ENCODE measurements at regions of chr3 and their contacts with region 1.

Region 1: DNA sequence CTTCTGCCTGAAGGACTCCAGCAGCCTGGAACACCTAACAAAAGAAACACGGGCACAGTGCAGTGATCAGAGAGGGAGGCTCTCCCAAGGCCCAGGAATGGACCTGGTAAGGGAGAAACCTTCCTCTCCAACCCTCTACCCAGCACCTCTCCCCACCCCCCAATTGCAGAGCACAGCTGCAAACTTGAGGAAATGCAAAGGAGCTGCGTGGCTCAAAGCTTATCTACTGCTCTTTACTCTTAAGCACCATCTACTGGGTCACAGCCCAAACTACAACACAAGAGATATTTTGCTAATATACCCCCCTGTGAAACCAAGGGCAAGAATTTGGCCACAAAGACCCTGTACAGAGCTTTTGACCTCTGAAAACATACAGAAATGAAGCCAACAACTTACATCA is 328.3 kb downstream of the OXSM start:
- DNase-seq: no peak
- ATAC-seq: peak; percentile 28 to 88 (median 66)
- H3K4me3 ChIP-seq: no peak overlapping the region
- H3K27ac ChIP-seq: no peak overlapping the region
- H3K4me1 ChIP-seq: no peaks in the 10 kb centered on the region
- H3K27me3 ChIP-seq: no peaks in the 10 kb centered on the region
- CTCF ChIP-seq: peak; percentile 52

Region 2: DNA sequence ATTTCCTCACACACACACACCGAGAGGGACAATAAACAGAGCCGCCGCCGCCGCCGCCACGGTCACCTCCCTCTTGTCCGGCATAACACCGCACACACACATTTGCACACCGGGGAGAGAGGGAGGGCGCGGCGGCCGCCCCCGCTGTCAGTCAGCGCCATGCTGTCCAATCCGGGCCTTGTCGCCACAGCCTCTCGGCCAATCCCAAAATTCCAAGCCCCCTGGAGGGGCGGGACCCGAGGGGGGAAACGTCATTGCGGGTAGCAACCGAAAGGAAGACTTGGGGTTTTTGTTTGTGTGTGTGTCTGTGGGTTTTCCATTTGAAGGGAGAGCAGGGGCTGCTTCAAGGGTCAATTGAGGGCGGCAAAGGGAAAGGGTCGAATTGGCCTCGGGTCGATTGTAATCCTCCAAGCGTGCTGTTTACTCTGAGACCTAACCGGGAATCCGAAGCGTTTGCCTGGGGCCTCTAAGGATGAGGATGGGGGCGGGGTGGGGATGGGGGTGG is 453.3 kb before region 1 on chr3 and contains the start of gene TOP2B:
- intact Hi-C with region 1: loop called in 1 of 2 experiments (anchors 10 kb)
- DNase-seq: peak; percentile 96 to 98
- ATAC-seq: peak; percentile 98 to 100 (median 99)
- H3K4me3 ChIP-seq: peak within 1 kb of the TSS; percentile 83
- H3K27ac ChIP-seq: peak within 1 kb of the TSS; percentile 96
- H3K4me1 ChIP-seq: peaks cover 35% of the 10 kb centered on the region
- H3K27me3 ChIP-seq: no peaks in the 10 kb centered on the region
- CTCF ChIP-seq: no peak
- total RNA-seq, gene TOP2B: 50.6 to 84.8 (median 70.1) TPM

Region 3: GRCh38 chr3:25843332-25843731 is 274.8 kb before region 1 on chr3:
- intact Hi-C with region 1: loop called in 1 of 2 experiments (anchors 10 kb)
- DNase-seq: no peak
- ATAC-seq: no peak
- H3K4me3 ChIP-seq: no peak overlapping the region
- H3K27ac ChIP-seq: no peak overlapping the region
- H3K4me1 ChIP-seq: no peaks in the 10 kb centered on the region
- H3K27me3 ChIP-seq: no peaks in the 10 kb centered on the region
- CTCF ChIP-seq: peak; percentile 21

Region 4: DNA sequence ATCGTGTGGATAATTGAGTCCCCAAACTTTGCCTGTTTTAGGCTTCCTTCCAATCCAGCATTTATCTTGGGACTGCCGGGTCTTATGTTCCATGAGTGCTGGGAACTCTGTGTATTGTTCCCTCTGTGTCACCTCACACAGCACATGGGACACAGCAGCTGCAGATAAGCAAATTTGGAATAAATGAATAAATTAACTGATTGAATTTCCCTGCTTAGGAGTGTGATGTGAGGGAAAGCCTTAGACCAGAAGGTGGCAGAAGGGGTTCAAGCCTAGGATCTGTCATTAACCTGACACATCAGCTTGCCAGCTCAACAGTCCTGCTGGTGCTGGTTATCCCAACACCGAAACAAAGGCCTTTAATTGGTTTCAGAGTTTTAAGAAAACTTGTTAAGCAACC is 214.0 kb before region 1 on chr3:
- intact Hi-C with region 1: loop called (anchors 5 to 10 kb)
- DNase-seq: no peak
- ATAC-seq: peak in 2 of 4 donors; percentile 59 to 73
- H3K4me3 ChIP-seq: no peak overlapping the region
- H3K27ac ChIP-seq: no peak overlapping the region
- H3K4me1 ChIP-seq: no peaks in the 10 kb centered on the region
- H3K27me3 ChIP-seq: no peaks in the 10 kb centered on the region
- CTCF ChIP-seq: peak; percentile 40

Region 5: DNA sequence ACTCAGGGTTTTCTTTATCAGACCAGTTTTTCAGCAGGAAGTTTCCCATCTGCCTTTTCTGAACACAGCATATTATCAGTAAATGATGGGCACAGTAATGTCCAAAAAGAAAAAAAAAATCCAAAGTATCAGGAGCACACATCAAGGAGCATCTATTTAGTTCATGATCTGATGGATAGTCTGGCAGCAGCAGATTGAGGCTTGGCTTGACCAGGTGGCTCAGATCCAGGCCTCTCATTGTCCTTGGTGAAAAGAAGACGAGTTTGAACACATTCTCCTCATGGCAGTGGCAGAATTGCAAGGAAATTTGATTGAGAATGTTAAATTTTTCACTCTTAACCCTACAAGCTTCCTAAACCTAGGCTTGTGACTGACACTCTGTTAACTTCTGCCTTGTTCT is 135.4 kb before region 1 on chr3:
- intact Hi-C with region 1: loop called in 1 of 2 experiments (anchors 10 kb)
- DNase-seq: no peak
- ATAC-seq: no peak
- H3K4me3 ChIP-seq: no peak overlapping the region
- H3K27ac ChIP-seq: no peak overlapping the region
- H3K4me1 ChIP-seq: no peaks in the 10 kb centered on the region
- H3K27me3 ChIP-seq: no peaks in the 10 kb centered on the region
- CTCF ChIP-seq: no peak

Region 6: DNA sequence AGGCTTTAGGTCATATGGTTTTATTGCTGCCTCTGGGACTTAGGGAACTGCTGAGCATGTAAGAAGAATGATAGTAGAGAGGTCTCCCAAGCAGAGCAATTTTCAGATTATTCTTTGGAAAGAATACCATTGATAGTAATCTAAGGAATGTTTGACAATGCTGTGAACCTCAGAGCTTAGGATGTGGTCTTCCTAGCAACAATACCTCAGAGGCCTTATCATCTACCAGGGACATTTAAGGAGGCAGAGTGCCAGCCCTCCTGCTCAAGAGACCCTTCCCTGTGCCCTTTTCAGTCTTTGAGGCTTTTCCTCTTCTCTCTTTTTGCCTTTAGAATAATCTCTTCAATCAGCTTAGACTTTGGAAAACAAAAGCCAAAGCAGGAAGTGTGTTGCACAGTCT is 56.2 kb before region 1 on chr3:
- intact Hi-C with region 1: loop called in 1 of 2 experiments (anchors 5 kb)
- DNase-seq: no peak
- ATAC-seq: no peak
- H3K4me3 ChIP-seq: no peak overlapping the region
- H3K27ac ChIP-seq: no peak overlapping the region
- H3K4me1 ChIP-seq: no peaks in the 10 kb centered on the region
- H3K27me3 ChIP-seq: no peaks in the 10 kb centered on the region
- CTCF ChIP-seq: no peak